ENCODE measurements at regions of chr16 and their contacts with region 1.

Region 1: GRCh38 chr16:77675464-77676324 is 46.6 kb upstream of the NUDT7 start:
- DNase-seq: peak; percentile 58
- H3K4me3 ChIP-seq: no peak overlapping the region
- H3K27ac ChIP-seq: no peak overlapping the region
- H3K4me1 ChIP-seq: no peaks in the 10 kb centered on the region
- H3K27me3 ChIP-seq: no peaks in the 10 kb centered on the region
- CTCF ChIP-seq: peak; percentile 88 to 91

Region 2: GRCh38 chr16:77246150-77246549 is 429.5 kb before region 1 on chr16:
- CTCF ChIA-PET with region 1: no interaction called
- dilution Hi-C with region 1: loop called (anchors 10 kb)
- in situ Hi-C with region 1: no loop called
- intact Hi-C with region 1: no loop called
- DNase-seq: no peak
- H3K4me3 ChIP-seq: no peak overlapping the region
- H3K27ac ChIP-seq: no peak overlapping the region
- H3K4me1 ChIP-seq: no peaks in the 10 kb centered on the region
- H3K27me3 ChIP-seq: no peaks in the 10 kb centered on the region
- CTCF ChIP-seq: no peak

Region 3: DNA sequence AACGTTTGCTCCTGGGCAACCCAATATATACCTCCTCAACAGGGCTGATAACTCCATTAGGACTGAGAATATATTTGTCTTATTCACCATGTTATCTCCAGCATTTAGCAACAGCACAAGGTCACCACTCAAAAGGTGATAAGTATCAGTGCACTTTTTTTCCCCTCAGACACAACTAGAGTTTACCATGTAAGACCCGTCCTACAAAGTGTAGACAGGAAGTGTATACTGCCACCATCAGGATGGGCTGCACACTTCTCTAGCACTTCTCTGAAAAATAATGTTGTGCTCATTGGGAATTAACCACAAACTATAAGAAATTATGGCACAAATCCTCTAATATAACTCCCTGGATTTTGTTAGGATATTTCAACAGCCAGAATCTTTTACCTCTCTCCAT is 107.0 kb after region 1 on chr16:
- CTCF ChIA-PET with region 1: no interaction called
- dilution Hi-C with region 1: no loop called
- in situ Hi-C with region 1: no loop called
- intact Hi-C with region 1: loop called (anchors 1 kb)
- DNase-seq: peak; percentile 11
- H3K4me3 ChIP-seq: no peak overlapping the region
- H3K27ac ChIP-seq: no peak overlapping the region
- H3K4me1 ChIP-seq: no peaks in the 10 kb centered on the region
- H3K27me3 ChIP-seq: no peaks in the 10 kb centered on the region
- CTCF ChIP-seq: peak; percentile 4 to 36

Region 4: GRCh38 chr16:77877712-77878347 is 202.1 kb after region 1 on chr16:
- CTCF ChIA-PET with region 1: interaction called, 10 read pairs
- dilution Hi-C with region 1: no loop called
- in situ Hi-C with region 1: no loop called
- intact Hi-C with region 1: no loop called
- DNase-seq: peak; percentile 72
- H3K4me3 ChIP-seq: no peak overlapping the region
- H3K27ac ChIP-seq: no peak overlapping the region
- H3K4me1 ChIP-seq: no peaks in the 10 kb centered on the region
- H3K27me3 ChIP-seq: no peaks in the 10 kb centered on the region
- CTCF ChIP-seq: no peak

Region 5: GRCh38 chr16:77971306-77972271 is 295.9 kb after region 1 on chr16:
- CTCF ChIA-PET with region 1: no interaction called
- dilution Hi-C with region 1: no loop called
- in situ Hi-C with region 1: loop called (anchors 5 kb)
- intact Hi-C with region 1: loop called (anchors 1 kb)
- DNase-seq: peak; percentile 42
- H3K4me3 ChIP-seq: no peak overlapping the region
- H3K27ac ChIP-seq: no peak overlapping the region
- H3K4me1 ChIP-seq: no peaks in the 10 kb centered on the region
- H3K27me3 ChIP-seq: no peaks in the 10 kb centered on the region
- CTCF ChIP-seq: peak; percentile 70 to 77

Region 6: GRCh38 chr16:78002915-78003538 is 327.3 kb after region 1 on chr16:
- CTCF ChIA-PET with region 1: no interaction called
- dilution Hi-C with region 1: no loop called
- in situ Hi-C with region 1: no loop called
- intact Hi-C with region 1: loop called (anchors 1 kb)
- DNase-seq: peak; percentile 73
- H3K4me3 ChIP-seq: no peak overlapping the region
- H3K27ac ChIP-seq: no peak overlapping the region
- H3K4me1 ChIP-seq: no peaks in the 10 kb centered on the region
- H3K27me3 ChIP-seq: no peaks in the 10 kb centered on the region
- CTCF ChIP-seq: peak; percentile 79 to 83

Region 7: GRCh38 chr16:78099372-78100161 is 423.9 kb after region 1 on chr16 and contains the start of gene WWOX:
- CTCF ChIA-PET with region 1: no interaction called
- dilution Hi-C with region 1: no loop called
- in situ Hi-C with region 1: no loop called
- intact Hi-C with region 1: loop called (anchors 1 kb)
- DNase-seq: peak; percentile 99
- H3K4me3 ChIP-seq: peak within 1 kb of the TSS; percentile 72 to 97 (median 89)
- H3K27ac ChIP-seq: peak within 1 kb of the TSS; percentile 78
- H3K4me1 ChIP-seq: peaks cover 14% of the 10 kb centered on the region
- H3K27me3 ChIP-seq: no peaks in the 10 kb centered on the region
- CTCF ChIP-seq: peak; percentile 57 to 95
- total RNA-seq, gene WWOX: 11.0 TPM